Head of caudate nucleus (tissue), 42 donors: ENCODE measurements at regions of chr1 and their contacts with region 1.

Region 1: GRCh38 chr1:227437495-227438008 is 119.3 kb upstream of the CDC42BPA start:
- DNase-seq: peak in 1 of 42 donors; percentile 55

Region 2: DNA sequence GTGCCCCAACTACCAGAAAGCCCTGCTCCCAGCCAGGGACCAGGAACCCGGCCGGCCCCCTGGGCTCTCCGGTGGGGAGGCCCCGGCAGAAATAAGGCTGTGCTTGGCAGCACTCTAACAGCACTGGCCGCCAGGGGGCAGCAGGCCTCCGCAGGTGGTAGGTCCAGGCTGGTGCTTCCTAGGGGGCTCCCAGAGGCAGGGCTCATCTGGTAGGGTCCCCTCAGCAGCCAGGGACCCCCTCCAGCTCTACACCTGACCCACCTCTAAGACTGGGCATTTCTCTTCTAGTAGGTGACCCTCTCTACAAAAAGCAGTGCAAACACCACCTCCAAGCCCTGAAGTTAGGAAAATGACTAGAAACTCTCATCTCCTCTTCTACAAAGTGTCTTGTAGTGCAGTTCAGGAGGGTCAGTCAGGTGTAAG is 803.4 kb before region 1 on chr1:
- intact Hi-C with region 1: loop called (anchors 10 kb)
- DNase-seq: peak; percentile 64 to 96 (median 89)

Region 3: GRCh38 chr1:226827968-226828513 is 609.5 kb before region 1 on chr1:
- intact Hi-C with region 1: loop called (anchors 5 kb)
- DNase-seq: peak; percentile 88 to 98 (median 95)

Region 4: DNA sequence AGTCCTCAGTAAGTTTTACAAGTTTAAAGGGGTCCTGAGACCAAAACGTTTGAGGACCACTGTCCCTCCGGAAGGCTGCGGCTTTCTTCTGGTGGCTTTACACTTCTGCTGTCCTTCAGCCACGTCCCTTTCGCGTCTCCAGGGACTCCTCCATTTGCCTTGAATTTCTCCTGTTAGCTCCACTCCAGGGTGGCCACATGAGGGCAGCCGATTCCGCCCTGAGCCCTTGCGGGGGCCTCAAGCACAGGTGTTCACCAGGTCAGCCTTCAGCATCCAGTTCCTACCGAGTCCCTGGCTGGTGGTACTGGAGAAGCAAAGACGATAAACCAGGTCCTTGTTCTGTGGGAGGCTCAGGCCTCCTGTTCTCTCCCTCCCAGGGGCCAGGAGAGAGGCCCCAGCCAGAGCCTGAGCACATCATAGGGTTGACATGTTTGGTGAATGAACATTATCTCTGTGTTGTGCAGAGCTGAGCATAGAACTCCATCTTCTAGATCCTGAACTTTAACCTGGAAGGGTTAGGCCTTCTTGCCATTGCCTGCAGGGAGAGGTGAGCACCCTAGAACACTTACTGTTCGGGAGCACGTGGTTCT is 524.9 kb before region 1 on chr1:
- intact Hi-C with region 1: loop called (anchors 10 kb)
- DNase-seq: peak; percentile 14 to 85 (median 66)

Region 5: GRCh38 chr1:227378871-227379554 is 58.5 kb before region 1 on chr1:
- intact Hi-C with region 1: no loop called
- DNase-seq: no peak